ENCODE measurements at regions of chr10 and their contacts with region 1.

Region 1: GRCh38 chr10:102713814-102714620 is at the start of gene ARL3:
- DNase-seq: peak; percentile 79 to 98 (median 94)
- ATAC-seq: peak; percentile 89
- H3K4me3 ChIP-seq: peak within 1 kb of the TSS; percentile 96 to 98
- H3K4me3 Mint-ChIP-seq: peak within 1 kb of the TSS; percentile 97
- H3K27ac ChIP-seq: peak within 1 kb of the TSS; percentile 84 to 91
- H3K27ac Mint-ChIP-seq: peak within 1 kb of the TSS; percentile 94
- H3K4me1 ChIP-seq: peaks cover 21% of the 10 kb centered on the region
- H3K4me1 Mint-ChIP-seq: peaks cover 59% of the 10 kb centered on the region
- H3K27me3 ChIP-seq: no peaks in the 10 kb centered on the region
- H3K27me3 Mint-ChIP-seq: no peaks in the 10 kb centered on the region
- CTCF ChIP-seq: peak; percentile 65
- total RNA-seq, gene ARL3: 0.49 to 0.75 TPM

Region 2: GRCh38 chr10:102620138-102620590 is 93.9 kb before region 1 on chr10:
- CTCF ChIA-PET with region 1: no interaction called
- POLR2A ChIA-PET with region 1: no interaction called
- intact Hi-C with region 1: no loop called
- DNase-seq: no peak
- ATAC-seq: no peak
- H3K4me3 ChIP-seq: no peak overlapping the region
- H3K4me3 Mint-ChIP-seq: no peak overlapping the region
- H3K27ac ChIP-seq: no peak overlapping the region
- H3K27ac Mint-ChIP-seq: no peak overlapping the region
- H3K4me1 ChIP-seq: no peaks in the 10 kb centered on the region
- H3K4me1 Mint-ChIP-seq: no peaks in the 10 kb centered on the region
- H3K27me3 ChIP-seq: no peaks in the 10 kb centered on the region
- H3K27me3 Mint-ChIP-seq: no peaks in the 10 kb centered on the region
- CTCF ChIP-seq: no peak

Region 3: GRCh38 chr10:102738692-102739121 is 24.7 kb after region 1 on chr10:
- CTCF ChIA-PET with region 1: interaction called, 3 read pairs
- POLR2A ChIA-PET with region 1: interaction called, 24 read pairs
- intact Hi-C with region 1: loop called (anchors 1 kb)
- DNase-seq: no peak
- ATAC-seq: no peak
- H3K4me3 ChIP-seq: no peak overlapping the region
- H3K4me3 Mint-ChIP-seq: no peak overlapping the region
- H3K27ac ChIP-seq: peak overlapping the region in 1 of 2 experiments; percentile 14
- H3K27ac Mint-ChIP-seq: peak overlapping the region; percentile 12
- H3K4me1 ChIP-seq: peaks cover 7% of the 10 kb centered on the region
- H3K4me1 Mint-ChIP-seq: peaks cover 14% of the 10 kb centered on the region
- H3K27me3 ChIP-seq: no peaks in the 10 kb centered on the region
- H3K27me3 Mint-ChIP-seq: no peaks in the 10 kb centered on the region
- CTCF ChIP-seq: no peak

Region 4: GRCh38 chr10:102752934-102753664 is 39.1 kb after region 1 on chr10:
- CTCF ChIA-PET with region 1: interaction called, 10 read pairs
- POLR2A ChIA-PET with region 1: no interaction called
- intact Hi-C with region 1: no loop called
- DNase-seq: peak in 3 of 9 experiments; percentile 23 to 60 (median 41)
- ATAC-seq: peak; percentile 86
- H3K4me3 ChIP-seq: no peak overlapping the region
- H3K4me3 Mint-ChIP-seq: no peak overlapping the region
- H3K27ac ChIP-seq: no peak overlapping the region
- H3K27ac Mint-ChIP-seq: peak overlapping the region; percentile 58
- H3K4me1 ChIP-seq: peaks cover 18% of the 10 kb centered on the region
- H3K4me1 Mint-ChIP-seq: peaks cover 44% of the 10 kb centered on the region
- H3K27me3 ChIP-seq: no peaks in the 10 kb centered on the region
- H3K27me3 Mint-ChIP-seq: no peaks in the 10 kb centered on the region
- CTCF ChIP-seq: peak; percentile 61

Region 5: GRCh38 chr10:103181244-103181643 is 467.2 kb after region 1 on chr10:
- CTCF ChIA-PET with region 1: no interaction called
- POLR2A ChIA-PET with region 1: no interaction called
- intact Hi-C with region 1: no loop called
- DNase-seq: peak in 1 of 9 experiments; percentile 30
- ATAC-seq: no peak
- H3K4me3 ChIP-seq: no peak overlapping the region
- H3K4me3 Mint-ChIP-seq: no peak overlapping the region
- H3K27ac ChIP-seq: no peak overlapping the region
- H3K27ac Mint-ChIP-seq: no peak overlapping the region
- H3K4me1 ChIP-seq: peaks cover 18% of the 10 kb centered on the region
- H3K4me1 Mint-ChIP-seq: peaks cover 53% of the 10 kb centered on the region
- H3K27me3 ChIP-seq: no peaks in the 10 kb centered on the region
- H3K27me3 Mint-ChIP-seq: no peaks in the 10 kb centered on the region
- CTCF ChIP-seq: no peak

Measured in CD8-positive, alpha-beta T cell (primary cell).